ENCODE measurements at regions of chr15 and their contacts with region 1.

Region 1: DNA sequence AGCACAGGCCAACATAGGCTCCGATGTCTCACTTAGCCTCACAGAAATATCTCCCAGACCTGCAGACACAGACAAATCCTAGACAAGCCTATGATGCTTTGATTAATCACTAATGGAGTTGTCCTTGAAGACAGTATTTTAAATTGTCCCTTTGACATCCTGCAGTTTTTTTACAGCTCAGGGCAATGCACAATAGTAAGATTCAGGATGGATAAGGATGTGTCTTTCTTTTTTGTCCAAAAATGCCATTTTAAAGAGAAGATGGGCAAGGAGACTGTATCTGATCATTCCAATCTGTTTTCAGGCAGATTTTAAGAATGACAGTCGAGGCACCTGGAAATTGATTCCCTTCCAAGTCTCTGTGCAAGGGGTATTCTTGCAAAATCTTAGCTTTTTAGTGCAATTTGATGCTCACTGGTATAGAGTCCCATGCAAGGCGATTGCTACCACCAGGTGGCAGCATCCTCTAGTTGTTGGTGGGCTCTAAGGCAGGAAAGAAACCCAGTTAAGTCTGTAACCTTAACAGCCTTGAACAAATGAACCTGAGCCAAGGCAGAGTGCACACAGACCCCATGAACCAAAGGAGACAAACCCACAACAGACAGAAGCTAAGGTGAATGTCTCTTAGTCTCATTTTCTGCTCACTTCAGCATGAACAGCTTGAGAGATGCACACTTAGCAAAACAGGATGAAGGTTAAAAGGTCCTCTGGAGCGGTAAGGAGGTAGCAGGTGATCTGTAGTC is 51.2 kb upstream of the MINAR1 start:
- DNase-seq: peak; percentile 77
- H3K4me3 ChIP-seq: no peak overlapping the region
- H3K27ac ChIP-seq: no peak overlapping the region
- H3K4me1 ChIP-seq: no peaks in the 10 kb centered on the region
- H3K27me3 ChIP-seq: no peaks in the 10 kb centered on the region
- CTCF ChIP-seq: peak; percentile 81 to 87
- POLR2A ChIP-seq: no peak

Region 2: DNA sequence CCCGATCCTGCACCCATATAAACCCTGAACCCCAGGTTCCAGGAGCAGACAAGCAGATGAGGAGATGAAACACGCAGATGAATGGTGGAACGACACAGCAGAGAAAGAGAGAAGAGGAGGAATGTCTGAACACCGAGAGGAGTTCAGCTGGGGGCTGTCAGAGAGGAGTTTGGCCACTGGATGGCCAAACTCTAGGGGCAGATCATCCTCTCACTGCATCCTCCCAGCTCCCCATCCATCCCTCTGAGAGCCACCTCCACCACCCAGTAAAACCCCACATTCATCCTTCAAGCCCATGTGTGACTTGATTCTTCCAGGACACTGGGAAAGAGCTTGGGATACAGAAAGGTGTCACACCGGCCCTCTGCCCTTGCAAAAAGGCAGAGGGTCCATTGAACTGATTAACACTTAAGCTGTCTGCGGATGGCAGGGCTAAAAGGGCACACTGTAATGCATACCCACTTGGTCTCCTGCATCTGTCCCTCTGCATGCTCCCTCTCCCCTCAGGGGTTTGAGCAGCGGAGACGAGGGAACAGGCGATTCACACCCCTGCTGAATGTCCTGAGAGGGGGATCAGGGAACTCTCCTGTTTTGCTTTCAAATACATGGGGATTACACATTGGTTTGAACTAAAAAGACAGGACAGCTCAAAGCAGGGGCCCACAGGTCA is 16.2 kb before region 1 on chr15:
- CTCF ChIA-PET with region 1: interaction called, 111 read pairs
- POLR2A ChIA-PET with region 1: no interaction called
- dilution Hi-C with region 1: no loop called
- intact Hi-C with region 1: no loop called
- DNase-seq: no peak
- H3K4me3 ChIP-seq: no peak overlapping the region
- H3K27ac ChIP-seq: no peak overlapping the region
- H3K4me1 ChIP-seq: no peaks in the 10 kb centered on the region
- H3K27me3 ChIP-seq: no peaks in the 10 kb centered on the region
- CTCF ChIP-seq: no peak
- POLR2A ChIP-seq: no peak

Region 3: DNA sequence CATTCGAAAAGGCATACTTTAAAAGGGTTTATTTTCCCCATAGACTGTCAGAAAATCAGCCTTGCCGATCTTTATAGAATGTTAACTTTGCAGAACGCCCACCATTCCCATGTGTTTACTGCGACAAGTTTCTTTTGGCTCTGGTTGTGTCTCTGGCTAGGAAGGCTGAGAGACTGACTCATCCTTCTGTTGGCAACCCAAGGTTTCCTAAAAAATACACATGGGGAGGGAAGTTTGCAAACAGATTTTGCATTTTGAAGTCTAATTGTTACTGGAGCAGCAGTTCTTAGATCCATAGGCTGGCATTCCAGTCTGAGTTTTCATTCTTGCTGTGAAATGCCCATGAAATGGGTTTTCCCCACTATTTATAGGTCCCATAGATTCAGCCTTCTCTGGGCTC is 13.3 kb after region 1 on chr15:
- CTCF ChIA-PET with region 1: interaction called, 43 read pairs
- POLR2A ChIA-PET with region 1: no interaction called
- dilution Hi-C with region 1: no loop called
- intact Hi-C with region 1: no loop called
- DNase-seq: peak; percentile 25
- H3K4me3 ChIP-seq: no peak overlapping the region
- H3K27ac ChIP-seq: no peak overlapping the region
- H3K4me1 ChIP-seq: no peaks in the 10 kb centered on the region
- H3K27me3 ChIP-seq: no peaks in the 10 kb centered on the region
- CTCF ChIP-seq: no peak
- POLR2A ChIP-seq: no peak

Region 4: DNA sequence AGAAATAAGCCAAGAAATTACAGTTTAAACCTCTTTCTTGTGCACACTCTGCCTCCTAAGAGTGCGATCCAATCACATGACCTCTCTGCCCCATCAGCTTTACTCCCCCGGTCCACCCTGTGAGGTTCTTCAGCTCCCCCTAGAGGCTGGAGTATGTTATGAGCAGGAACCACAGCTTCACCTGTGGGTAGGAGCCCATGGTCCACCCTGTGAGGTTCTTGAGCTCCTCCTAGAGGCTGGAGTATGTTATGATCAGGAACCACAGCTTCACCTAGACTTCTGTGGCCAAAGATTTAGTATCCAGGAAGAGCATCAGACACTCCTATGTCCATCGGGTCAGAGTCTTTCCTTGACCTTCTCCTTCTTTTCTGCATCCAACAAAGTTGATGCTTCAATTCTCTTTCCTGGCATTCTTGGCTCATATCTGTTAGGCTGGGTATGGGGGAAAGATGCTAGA is 215.2 kb after region 1 on chr15:
- CTCF ChIA-PET with region 1: interaction called, 93 read pairs
- POLR2A ChIA-PET with region 1: no interaction called
- dilution Hi-C with region 1: no loop called
- intact Hi-C with region 1: loop called (anchors 1 kb)
- DNase-seq: peak; percentile 64
- H3K4me3 ChIP-seq: no peak overlapping the region
- H3K27ac ChIP-seq: no peak overlapping the region
- H3K4me1 ChIP-seq: no peaks in the 10 kb centered on the region
- H3K27me3 ChIP-seq: no peaks in the 10 kb centered on the region
- CTCF ChIP-seq: peak; percentile 79 to 94
- POLR2A ChIP-seq: no peak

Region 5: DNA sequence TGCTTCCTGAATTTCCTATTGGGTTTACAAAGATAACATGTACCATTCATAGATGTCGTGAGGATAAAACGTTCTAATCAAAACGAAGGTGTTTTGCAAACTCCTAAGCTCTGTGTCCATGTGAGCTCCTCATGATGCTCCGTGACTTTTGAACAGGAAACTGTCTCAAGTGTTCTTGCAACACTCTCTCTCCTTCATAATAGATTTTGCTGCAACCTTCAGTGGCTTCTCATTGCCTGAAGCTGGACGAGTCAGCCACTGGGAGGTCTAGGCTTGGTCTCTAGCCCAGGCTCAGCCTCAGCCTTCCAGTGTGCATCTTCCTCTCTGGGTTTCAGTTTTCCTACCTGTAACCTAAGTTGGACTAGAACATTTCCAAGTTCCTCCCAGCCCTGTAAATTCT is 608.8 kb after region 1 on chr15:
- CTCF ChIA-PET with region 1: interaction called, 63 read pairs
- POLR2A ChIA-PET with region 1: no interaction called
- dilution Hi-C with region 1: no loop called
- intact Hi-C with region 1: loop called (anchors 1 kb)
- DNase-seq: no peak
- H3K4me3 ChIP-seq: no peak overlapping the region
- H3K27ac ChIP-seq: no peak overlapping the region
- H3K4me1 ChIP-seq: no peaks in the 10 kb centered on the region
- H3K27me3 ChIP-seq: peaks cover under 1 to 3% of the 10 kb centered on the region in 2 experiments
- CTCF ChIP-seq: no peak
- POLR2A ChIP-seq: no peak

Measured in endothelial cell of umbilical vein (primary cell).